Prostate gland (tissue), 2 donors: ENCODE measurements at regions of chr7 and their contacts with region 1.

Region 1: DNA sequence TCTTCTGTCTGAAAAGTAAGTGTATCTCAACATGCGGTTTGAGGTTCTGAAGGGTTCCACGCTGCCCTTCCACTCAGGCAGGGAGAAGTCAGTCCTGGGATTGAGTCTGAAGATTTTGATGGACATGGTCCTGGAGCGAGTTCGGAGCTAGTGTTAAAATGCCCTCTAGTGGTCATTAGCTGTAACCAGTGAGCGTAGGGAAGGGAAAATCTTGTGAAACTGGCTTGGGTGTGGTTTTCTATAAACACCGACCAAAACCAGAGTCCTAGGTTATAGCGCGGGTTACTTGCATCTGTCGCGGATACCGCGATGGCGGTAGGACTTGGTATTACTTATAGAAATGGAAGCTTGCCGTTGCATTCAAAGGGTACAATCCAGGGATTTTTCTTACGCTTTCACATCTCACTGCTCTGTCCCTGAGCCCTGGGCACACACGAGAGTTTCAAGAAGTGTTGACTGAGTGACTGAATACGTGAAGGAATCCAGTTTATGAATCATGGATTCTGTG is 348.2 kb upstream of the C7orf33 start:
- DNase-seq: peak; percentile 39
- H3K4me3 ChIP-seq: no peak overlapping the region
- H3K27ac ChIP-seq: no peak overlapping the region
- H3K4me1 ChIP-seq: peaks cover 3% of the 10 kb centered on the region
- H3K27me3 ChIP-seq: no peaks in the 10 kb centered on the region
- CTCF ChIP-seq: peak; percentile 34 to 75 (median 67)
- POLR2A ChIP-seq: no peak

Region 2: GRCh38 chr7:147245292-147245691 is 997.1 kb before region 1 on chr7:
- intact Hi-C with region 1: loop called (anchors 10 kb)
- DNase-seq: peak; percentile 20
- H3K4me3 ChIP-seq: no peak overlapping the region
- H3K27ac ChIP-seq: no peak overlapping the region
- H3K4me1 ChIP-seq: no peaks in the 10 kb centered on the region
- H3K27me3 ChIP-seq: no peaks in the 10 kb centered on the region
- CTCF ChIP-seq: peak; percentile 15 to 53 (median 39)
- POLR2A ChIP-seq: no peak

Region 3: GRCh38 chr7:148142660-148143248 is 99.6 kb before region 1 on chr7:
- intact Hi-C with region 1: loop called (anchors 10 kb)
- DNase-seq: peak; percentile 39
- H3K4me3 ChIP-seq: no peak overlapping the region
- H3K27ac ChIP-seq: no peak overlapping the region
- H3K4me1 ChIP-seq: no peaks in the 10 kb centered on the region
- H3K27me3 ChIP-seq: no peaks in the 10 kb centered on the region
- CTCF ChIP-seq: peak in 3 of 4 experiments; percentile 49 to 58 (median 54)
- POLR2A ChIP-seq: no peak

Region 4: DNA sequence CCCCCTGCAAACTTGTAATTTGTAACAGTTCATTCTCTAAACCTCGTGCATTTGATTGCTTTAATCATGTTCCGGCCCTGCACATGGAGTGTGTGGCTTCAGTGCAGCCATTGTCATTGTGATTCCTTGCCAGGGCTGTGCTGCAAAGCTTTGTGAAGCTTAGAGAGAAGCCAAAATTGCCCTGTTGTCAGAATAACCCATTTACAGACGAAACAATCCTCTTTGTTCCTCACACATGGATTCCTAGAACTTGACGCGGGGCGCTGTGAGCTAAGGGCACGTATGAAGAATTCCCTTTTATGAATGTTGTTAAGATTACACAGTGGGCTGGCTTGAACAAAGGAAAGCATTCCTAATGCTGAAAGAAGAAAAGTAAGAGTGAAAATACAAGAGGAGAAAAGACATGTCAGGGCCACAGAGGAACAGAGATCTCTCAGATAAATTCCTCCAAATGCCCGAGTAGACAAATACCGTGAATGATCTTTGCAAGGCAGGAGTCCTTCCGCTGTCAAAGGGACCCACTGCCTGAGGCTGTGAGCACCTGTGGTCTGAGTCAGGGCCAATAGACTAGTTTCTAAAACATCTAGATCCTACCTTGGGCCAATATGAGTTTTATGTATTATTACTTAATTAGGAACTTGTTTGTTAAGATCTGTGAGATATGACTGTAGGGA is 142.8 kb after region 1 on chr7:
- intact Hi-C with region 1: no loop called
- DNase-seq: peak; percentile 14
- H3K4me3 ChIP-seq: no peak overlapping the region
- H3K27ac ChIP-seq: peak overlapping the region in 1 of 2 donors; percentile 25
- H3K4me1 ChIP-seq: no peaks in the 10 kb centered on the region
- H3K27me3 ChIP-seq: no peaks in the 10 kb centered on the region
- CTCF ChIP-seq: no peak
- POLR2A ChIP-seq: no peak